ENCODE measurements at regions of chr9 and their contacts with region 1.

Region 1: DNA sequence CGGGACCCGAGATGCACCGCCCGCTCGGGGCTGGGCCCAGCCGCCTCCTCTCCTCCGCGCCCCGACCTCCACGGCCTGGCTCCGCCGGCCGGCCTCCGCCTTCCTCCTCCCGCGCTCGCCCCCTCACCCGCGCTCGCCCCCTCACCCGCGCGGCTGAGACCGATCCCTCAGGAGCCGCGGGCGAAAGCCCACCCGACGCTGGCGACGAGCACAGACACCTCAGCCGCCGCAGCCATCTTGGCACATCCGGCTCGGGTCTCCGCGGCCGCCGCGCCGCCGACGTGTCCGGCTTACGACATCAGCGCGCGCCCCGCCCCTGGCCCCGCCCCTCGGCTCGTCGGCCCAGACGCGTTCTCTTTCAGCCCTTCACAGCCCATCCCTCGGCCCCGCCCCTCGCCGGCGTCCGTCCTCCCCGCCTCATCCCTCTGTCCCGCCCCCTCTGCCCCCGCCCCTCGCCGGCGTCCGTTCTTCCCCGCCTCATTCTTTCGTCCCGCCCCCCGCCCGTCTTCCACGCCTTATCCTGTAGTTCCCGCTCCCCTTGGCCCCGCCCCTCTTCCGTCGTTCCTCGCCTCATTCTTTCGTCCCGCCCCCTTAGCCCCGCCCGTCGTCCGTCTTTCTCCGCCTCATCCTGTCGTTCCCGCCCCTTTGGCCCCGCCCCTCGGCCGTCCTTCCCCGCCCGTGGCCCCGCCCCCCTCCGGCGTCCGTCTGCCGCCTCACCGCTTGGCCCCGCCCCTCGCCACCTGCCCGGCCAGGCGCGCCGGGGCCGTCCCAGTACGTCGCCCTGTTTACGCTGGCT is at the start of gene SEC16A:
- DNase-seq: peak; percentile 99
- total RNA-seq, gene SEC16A: 4.1 and 7.2 TPM in 2 replicates

Region 2: GRCh38 chr9:136545966-136546698 is 63.1 kb after region 1 on chr9 and contains the start of gene NOTCH1:
- in situ Hi-C with region 1: loop called (anchors 5 kb)
- DNase-seq: peak; percentile 59
- total RNA-seq, gene NOTCH1: 10.9 and 13.8 TPM in 2 replicates

Region 3: DNA sequence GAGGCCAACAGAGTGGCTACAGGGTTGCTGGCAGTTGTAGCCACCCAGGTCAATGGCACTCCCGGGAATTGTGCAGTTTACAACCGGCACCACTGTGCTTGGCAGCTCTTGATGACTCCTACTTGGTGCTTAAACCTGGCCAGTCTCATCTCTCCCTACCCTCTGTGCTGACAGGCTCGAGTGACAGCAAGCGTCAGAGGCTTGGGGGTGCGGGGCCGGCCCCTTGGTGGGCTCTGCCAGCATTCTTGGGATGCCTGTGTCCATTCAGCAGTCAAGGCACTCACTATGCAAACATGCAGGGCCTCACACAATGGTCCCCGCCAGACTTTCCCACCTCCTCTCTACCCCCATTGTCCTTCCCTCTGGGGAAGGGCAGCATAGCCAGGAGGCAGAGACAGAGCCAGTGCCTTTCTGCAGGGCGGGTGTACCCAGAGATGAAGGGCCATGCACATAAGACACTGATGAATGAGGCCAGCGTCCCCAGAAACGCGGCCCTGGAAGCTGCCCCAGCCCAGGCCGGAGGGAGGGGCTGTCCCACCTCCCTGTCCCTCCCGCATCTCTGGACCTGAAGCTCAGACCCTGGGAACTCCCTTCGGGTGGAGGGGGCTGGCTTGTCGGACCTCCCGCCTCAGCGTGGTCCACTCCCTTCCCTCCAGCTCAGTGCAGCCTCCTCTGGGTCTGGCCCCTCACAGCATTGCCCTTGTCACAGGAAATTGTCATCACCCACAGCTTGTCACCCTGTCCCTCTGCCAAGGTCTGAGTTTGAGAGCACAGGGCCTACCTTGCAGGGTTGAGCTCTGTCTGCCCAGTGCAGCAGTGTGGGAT is 89.2 kb after region 1 on chr9:
- in situ Hi-C with region 1: loop called (anchors 10 kb)
- DNase-seq: no peak

Region 4: GRCh38 chr9:136671646-136672430 is 188.8 kb after region 1 on chr9:
- in situ Hi-C with region 1: loop called (anchors 10 kb)
- DNase-seq: no peak